HEK293T (cell line): ENCODE measurements at regions of chr20 and their contacts with region 1.

Region 1: DNA sequence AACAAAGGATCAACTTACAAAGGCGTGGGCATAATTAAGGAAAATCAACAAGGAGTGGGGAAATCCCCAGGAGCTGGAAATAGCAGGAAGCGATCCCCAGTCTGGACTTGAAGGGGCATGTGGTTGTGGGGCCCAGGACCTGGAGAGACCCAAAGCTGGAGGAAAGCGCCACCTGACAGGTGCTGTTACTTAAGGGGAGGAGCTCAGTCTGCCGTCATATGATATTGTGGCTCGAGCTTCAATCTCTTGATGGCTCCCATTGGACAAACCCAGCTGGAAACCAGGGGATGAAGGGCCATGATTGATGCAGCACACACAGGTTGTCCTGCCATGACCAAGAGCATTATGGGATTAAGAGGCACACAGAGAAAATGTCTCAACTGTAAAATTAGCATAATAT is 51.9 kb upstream of the FAM210B start:
- DNase-seq: no peak

Region 2: GRCh38 chr20:56187534-56188198 is 119.2 kb before region 1 on chr20:
- CTCF ChIA-PET with region 1: interaction called, 10 read pairs
- POLR2A ChIA-PET with region 1: no interaction called
- DNase-seq: no peak

Region 3: GRCh38 chr20:56516631-56517030 is 209.7 kb after region 1 on chr20:
- CTCF ChIA-PET with region 1: interaction called, 11 read pairs
- POLR2A ChIA-PET with region 1: no interaction called
- DNase-seq: no peak